Sigmoid colon (tissue), 7 donors: ENCODE measurements at regions of chr11 and their contacts with region 1.

Region 1: DNA sequence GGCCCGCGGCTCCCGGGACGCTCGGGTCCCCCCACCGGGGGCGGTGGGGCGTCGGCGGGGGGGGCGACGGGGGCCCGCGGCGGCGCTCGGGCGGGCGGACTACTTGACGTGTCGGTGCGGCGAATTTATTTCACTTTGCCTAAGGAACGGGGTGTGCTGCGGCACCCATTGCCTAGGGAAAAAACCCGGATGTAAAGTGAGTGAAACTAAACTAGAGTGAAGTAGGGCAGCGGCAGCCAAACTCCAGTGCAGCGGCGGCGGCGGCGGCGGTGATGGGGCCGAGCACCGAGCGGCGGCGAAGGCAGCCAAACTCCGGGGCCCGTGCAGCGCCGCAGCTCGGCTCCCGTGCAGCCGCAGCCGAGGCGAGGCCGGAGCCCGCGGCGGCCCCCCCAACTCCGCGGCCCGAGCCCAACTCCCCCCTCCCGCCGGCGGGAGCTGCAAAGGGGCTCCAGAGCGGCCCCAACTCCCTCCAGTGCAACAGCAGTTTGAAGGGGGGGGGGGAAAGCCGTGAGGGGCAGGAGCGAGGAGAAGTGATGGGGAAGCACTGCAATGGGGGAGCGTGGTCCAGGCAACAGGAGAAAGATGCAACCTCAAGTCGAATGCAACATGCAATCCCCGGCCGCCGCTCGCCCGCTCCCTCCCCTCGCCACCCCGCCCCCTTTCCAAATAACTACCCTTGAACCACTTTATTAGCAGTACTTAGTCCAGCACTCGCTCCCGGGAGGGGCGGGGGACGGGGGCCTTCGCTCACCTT is 647 bp upstream of the PHF21A start:
- DNase-seq: peak; percentile 91
- H3K4me3 ChIP-seq: peak overlapping the region; percentile 56 to 93 (median 87)
- H3K27ac ChIP-seq: peak overlapping the region; percentile 93 to 97 (median 94)
- H3K4me1 ChIP-seq: peaks cover 0 to 37% (median 24%) of the 10 kb centered on the region in 4 donors
- H3K27me3 ChIP-seq: no peaks in the 10 kb centered on the region
- CTCF ChIP-seq: no peak
- EP300 ChIP-seq: no peak
- POLR2A ChIP-seq: no peak

Region 2: DNA sequence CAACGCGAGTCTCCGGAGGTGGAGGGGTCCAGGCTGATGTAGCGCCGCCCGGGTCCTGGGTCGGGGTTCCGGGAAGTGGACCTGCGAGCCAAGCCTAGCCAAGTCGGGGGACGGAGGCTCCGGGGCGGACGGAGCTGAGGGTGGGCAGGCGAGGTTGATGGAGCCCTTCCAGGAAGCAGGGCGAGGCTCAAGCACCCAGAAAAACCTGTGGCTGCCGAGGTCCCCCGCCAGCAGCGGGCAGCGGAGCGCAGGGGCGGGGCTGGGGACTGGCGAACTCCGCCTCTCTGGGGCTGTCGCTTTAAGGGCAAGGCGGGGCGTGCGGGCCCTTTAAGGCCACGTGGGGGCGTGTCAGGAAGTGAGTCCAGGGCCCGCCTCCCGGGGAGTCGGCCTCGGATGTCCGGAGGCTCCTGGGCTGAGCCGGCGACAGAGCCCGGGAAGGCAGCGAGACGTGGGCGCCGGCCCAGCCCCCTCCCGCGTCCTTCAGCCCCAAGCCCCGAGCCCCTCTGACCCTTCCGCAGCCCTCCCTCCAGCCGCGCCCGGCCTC is 317.1 kb before region 1 on chr11 and contains the start of gene SLC35C1:
- intact Hi-C with region 1: loop called (anchors 10 kb)
- DNase-seq: peak; percentile 99
- H3K4me3 ChIP-seq: peak within 1 kb of the TSS; percentile 63 to 92 (median 77)
- H3K27ac ChIP-seq: peak within 1 kb of the TSS; percentile 87 to 94 (median 89)
- H3K4me1 ChIP-seq: peaks cover 0 to 47% (median 31%) of the 10 kb centered on the region in 4 donors
- H3K27me3 ChIP-seq: no peaks in the 10 kb centered on the region
- CTCF ChIP-seq: no peak
- EP300 ChIP-seq: no peak
- POLR2A ChIP-seq: peak; percentile 68 to 90
- total RNA-seq, gene SLC35C1: 5.3 to 8.6 (median 7.2) TPM

Region 3: DNA sequence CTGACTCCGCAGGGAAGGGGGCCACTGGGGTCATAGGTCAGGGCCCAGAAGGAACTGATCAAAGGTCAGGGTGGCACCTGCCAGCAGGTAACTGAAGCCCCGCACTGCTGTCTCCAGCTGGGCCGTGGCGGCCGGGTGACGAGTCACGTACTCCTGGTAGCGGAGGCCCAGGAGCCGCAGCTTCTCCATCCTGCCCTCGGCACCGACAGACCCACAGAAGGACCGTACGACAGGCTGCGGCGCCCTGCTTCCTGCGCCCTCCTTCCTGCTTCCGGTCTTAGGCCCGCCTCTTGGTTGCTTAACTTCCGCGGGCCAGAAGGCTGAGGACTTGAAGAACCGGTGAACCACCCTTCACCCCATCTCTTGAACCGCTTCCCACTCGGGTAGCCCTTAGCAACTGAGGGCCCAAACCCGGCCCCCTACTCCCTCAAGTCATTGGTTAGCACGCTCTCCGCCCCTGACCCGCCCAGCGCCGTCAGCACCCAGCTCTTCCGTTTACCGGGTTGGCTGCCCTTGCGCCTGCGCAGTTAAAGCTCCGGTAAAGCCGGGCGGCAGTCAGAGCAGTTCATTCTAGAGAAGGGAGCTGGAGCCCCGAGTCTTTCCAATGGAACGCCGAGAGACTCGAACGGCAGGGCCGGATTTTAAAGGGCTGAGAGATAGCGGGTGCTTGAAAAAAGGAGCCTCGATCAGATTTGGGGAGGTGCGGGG is 204.1 kb before region 1 on chr11 and contains the start of gene PEX16:
- intact Hi-C with region 1: loop called (anchors 1 kb)
- DNase-seq: peak; percentile 99
- H3K4me3 ChIP-seq: peak within 1 kb of the TSS; percentile 81 to 96 (median 86)
- H3K27ac ChIP-seq: peak within 1 kb of the TSS; percentile 90 to 92 (median 91)
- H3K4me1 ChIP-seq: peaks cover 0 to 31% (median 26%) of the 10 kb centered on the region in 4 donors
- H3K27me3 ChIP-seq: peaks cover 8 to 16% (median 13%) of the 10 kb centered on the region in 3 donors
- CTCF ChIP-seq: no peak
- EP300 ChIP-seq: peak in 1 of 4 donors; percentile 24
- POLR2A ChIP-seq: peak; percentile 63 to 75
- total RNA-seq, gene PEX16: 13.8 to 28.2 (median 21.6) TPM

Region 4: GRCh38 chr11:46075168-46075567 is 46.7 kb before region 1 on chr11:
- intact Hi-C with region 1: loop called (anchors 10 kb)
- DNase-seq: no peak
- H3K4me3 ChIP-seq: no peak overlapping the region
- H3K27ac ChIP-seq: peak overlapping the region in 2 of 4 donors; percentile 29 to 49
- H3K4me1 ChIP-seq: peaks cover 0 to 32% (median 21%) of the 10 kb centered on the region in 4 donors
- H3K27me3 ChIP-seq: no peaks in the 10 kb centered on the region
- CTCF ChIP-seq: no peak
- EP300 ChIP-seq: no peak
- POLR2A ChIP-seq: no peak

Region 5: DNA sequence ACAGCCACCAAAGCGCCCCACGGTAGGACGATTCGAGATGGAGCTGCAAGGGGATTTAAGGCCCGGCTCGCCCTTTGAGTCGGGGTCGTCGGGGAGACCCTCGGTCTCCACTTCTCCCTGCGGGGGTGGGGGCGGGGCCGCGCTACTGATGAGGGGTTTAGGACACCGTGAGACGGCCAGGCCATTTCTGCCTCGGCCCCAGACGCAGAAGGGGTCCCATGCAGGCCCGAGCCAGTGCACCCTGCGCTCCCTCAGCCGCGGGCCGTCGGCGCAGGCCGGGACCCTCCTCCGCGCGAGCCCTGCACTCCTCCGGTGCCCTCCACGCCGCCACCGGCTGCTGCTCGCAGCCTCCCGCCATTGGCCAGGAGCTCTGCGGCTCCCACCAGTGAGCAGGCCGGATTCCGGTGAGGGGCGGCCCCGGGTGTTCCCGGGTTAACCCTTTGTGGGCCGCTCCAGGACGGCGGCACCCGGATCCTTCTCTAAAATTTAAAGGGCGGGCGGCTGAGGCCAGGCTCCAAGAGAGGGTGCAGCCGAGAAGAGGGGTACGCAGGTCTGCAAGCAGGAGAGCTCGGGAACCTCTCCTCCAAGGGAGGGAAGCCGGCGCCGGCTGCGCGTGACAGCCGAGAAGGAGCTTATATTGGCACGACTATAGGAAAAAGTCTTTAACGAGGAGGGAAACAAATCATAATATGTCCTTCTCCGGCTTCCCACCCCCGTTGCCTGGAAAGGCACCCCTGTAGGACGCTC is 173.6 kb after region 1 on chr11:
- intact Hi-C with region 1: loop called (anchors 5 kb)
- DNase-seq: peak; percentile 91
- H3K4me3 ChIP-seq: peak overlapping the region; percentile 25 to 63 (median 54)
- H3K27ac ChIP-seq: peak overlapping the region; percentile 45 to 75 (median 62)
- H3K4me1 ChIP-seq: peaks cover 0 to 54% (median 49%) of the 10 kb centered on the region in 4 donors
- H3K27me3 ChIP-seq: no peaks in the 10 kb centered on the region
- CTCF ChIP-seq: no peak
- EP300 ChIP-seq: peak in 1 of 4 donors; percentile 41
- POLR2A ChIP-seq: no peak